Activated CD4-positive, alpha-beta memory T cell treated with anti-CD3 and anti-CD28 coated beads for 36 hours (primary cell): ENCODE measurements at regions of chr11 and their contacts with region 1.

Region 1: DNA sequence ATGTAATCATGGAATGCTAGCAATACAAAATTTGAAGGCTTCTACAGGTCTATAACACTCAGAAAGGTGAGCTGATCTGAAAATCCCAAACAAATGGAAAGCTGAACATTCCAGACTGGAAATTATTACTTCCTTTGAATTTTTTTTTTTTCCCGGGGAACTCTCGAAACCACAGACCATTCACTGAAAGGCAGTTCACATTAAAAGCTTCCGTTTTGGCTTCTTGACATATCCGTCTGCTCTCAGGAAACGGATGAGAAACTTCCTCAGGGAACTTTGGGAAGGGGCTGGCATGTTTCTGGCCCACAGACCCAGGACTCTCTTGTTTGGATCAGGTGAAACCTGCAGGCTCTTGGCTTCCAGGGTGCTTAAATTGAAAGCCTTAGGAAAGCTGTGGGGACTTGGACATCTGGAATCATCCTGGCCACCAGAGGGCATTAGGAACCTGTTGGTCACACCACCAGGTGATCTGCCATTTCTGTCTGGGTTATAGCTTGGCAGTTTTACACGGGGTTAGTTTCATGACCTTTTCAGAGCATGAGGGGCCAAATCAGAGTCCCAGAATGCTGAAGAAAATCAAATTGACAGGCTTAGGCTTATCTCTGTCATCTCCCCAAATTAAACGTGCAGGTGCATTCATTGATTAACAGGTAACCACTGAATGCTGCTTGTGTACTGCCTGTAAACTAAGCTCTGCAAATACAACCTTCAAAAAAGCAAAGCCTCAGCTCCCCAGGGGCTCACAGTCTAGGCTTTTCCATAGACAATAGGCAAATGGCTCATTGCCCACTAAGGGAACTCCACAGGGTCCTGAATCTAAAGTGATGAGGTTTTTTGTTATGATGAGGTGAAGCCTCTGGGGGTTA is 22.7 kb upstream of the GRAMD1B start:
- DNase-seq: peak; percentile 72
- H3K4me3 Mint-ChIP-seq: peak overlapping the region; percentile 55
- H3K27ac Mint-ChIP-seq: peak overlapping the region; percentile 65
- H3K4me1 Mint-ChIP-seq: peaks cover 33% of the 10 kb centered on the region
- H3K27me3 Mint-ChIP-seq: peaks cover 6% of the 10 kb centered on the region

Region 2: DNA sequence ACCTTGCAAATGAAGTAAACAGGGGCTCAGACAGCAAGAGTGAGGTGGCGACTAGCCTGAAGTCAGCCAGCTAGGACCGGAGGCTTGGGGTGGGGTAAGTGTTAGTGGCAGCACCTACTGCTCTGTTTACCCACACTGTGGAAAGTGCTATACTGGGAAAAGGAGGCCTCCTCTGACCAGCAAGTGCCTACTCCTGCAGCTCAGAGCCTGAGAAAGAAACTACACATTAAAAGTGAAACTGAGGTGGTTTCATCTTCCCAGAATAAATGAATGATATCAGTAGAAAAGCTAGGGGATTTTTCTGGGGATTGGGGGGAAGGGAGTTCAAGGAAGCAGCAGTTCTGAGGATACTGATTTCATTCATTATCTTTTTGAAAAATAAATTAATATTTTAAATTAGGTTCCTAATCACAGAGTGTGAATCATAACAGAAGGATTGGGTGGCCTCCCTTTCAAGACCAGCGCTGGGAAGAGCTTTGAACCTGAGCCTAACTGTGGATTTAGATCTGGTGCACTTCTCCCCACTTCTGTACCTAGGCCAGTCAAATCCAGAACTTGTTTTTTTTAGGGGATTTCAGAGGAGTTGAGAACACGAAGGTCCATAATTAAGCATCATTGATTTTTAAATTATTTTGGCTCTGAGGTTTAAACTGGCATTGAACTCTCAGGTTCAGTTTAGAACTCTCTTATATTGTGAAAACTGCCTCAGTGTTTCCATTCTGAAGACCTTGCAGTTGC is 25.4 kb before region 1 on chr11:
- CTCF ChIA-PET with region 1: interaction called, 29 read pairs
- POLR2A ChIA-PET with region 1: interaction called, 10 read pairs
- intact Hi-C with region 1: loop called (anchors 1 kb)
- DNase-seq: peak; percentile 83
- H3K4me3 Mint-ChIP-seq: no peak overlapping the region
- H3K27ac Mint-ChIP-seq: no peak overlapping the region
- H3K4me1 Mint-ChIP-seq: peaks cover 22% of the 10 kb centered on the region
- H3K27me3 Mint-ChIP-seq: no peaks in the 10 kb centered on the region

Region 3: GRCh38 chr11:123454060-123454651 is 46.8 kb after region 1 on chr11:
- CTCF ChIA-PET with region 1: interaction called, 18 read pairs
- POLR2A ChIA-PET with region 1: interaction called, 3 read pairs
- intact Hi-C with region 1: loop called (anchors 2 kb)
- DNase-seq: peak; percentile 92
- H3K4me3 Mint-ChIP-seq: peak overlapping the region; percentile 74
- H3K27ac Mint-ChIP-seq: peak overlapping the region; percentile 97
- H3K4me1 Mint-ChIP-seq: peaks cover 82% of the 10 kb centered on the region
- H3K27me3 Mint-ChIP-seq: no peaks in the 10 kb centered on the region

Region 4: DNA sequence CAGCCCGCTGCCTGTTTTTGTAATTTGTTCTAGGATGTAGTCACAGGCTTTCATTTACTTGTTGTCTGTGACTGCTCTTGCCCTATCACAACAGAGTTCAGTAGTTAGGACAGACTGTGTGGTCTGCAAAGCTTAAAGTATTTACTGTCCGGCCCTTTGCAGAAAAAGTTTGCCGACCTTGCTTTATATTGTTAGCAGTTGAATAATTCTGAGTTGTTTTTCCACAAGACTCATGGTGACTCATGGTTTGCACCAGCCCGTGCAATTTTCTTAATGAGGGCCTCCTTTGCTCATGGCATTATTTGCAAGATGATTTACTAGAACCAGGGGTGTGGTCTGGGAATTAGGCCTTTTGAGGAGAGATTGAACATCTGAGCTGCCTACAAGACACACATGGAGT is 136.4 kb after region 1 on chr11:
- CTCF ChIA-PET with region 1: no interaction called
- POLR2A ChIA-PET with region 1: no interaction called
- intact Hi-C with region 1: no loop called
- DNase-seq: no peak
- H3K4me3 Mint-ChIP-seq: no peak overlapping the region
- H3K27ac Mint-ChIP-seq: no peak overlapping the region
- H3K4me1 Mint-ChIP-seq: peaks cover 14% of the 10 kb centered on the region
- H3K27me3 Mint-ChIP-seq: no peaks in the 10 kb centered on the region

Region 5: GRCh38 chr11:123560006-123560405 is 152.6 kb after region 1 on chr11:
- CTCF ChIA-PET with region 1: interaction called, 7 read pairs
- POLR2A ChIA-PET with region 1: no interaction called
- intact Hi-C with region 1: loop called (anchors 5 kb)
- DNase-seq: peak; percentile 25
- H3K4me3 Mint-ChIP-seq: no peak overlapping the region
- H3K27ac Mint-ChIP-seq: no peak overlapping the region
- H3K4me1 Mint-ChIP-seq: peaks cover 9% of the 10 kb centered on the region
- H3K27me3 Mint-ChIP-seq: no peaks in the 10 kb centered on the region